Mammary epithelial cell (primary cell): ENCODE measurements at regions of chr1 and their contacts with region 1.

Region 1: GRCh38 chr1:202888531-202889360 is at the start of gene RABIF:
- DNase-seq: peak; percentile 92
- H3K4me3 ChIP-seq: peak within 1 kb of the TSS; percentile 87 to 93 (median 88)
- H3K27ac ChIP-seq: peak within 1 kb of the TSS; percentile 64
- H3K4me1 ChIP-seq: peaks cover 12% of the 10 kb centered on the region
- H3K27me3 ChIP-seq: no peaks in the 10 kb centered on the region
- CTCF ChIP-seq: peak in 1 of 2 donors; percentile 37
- total RNA-seq, gene RABIF: 5.2 to 8.5 TPM

Region 2: DNA sequence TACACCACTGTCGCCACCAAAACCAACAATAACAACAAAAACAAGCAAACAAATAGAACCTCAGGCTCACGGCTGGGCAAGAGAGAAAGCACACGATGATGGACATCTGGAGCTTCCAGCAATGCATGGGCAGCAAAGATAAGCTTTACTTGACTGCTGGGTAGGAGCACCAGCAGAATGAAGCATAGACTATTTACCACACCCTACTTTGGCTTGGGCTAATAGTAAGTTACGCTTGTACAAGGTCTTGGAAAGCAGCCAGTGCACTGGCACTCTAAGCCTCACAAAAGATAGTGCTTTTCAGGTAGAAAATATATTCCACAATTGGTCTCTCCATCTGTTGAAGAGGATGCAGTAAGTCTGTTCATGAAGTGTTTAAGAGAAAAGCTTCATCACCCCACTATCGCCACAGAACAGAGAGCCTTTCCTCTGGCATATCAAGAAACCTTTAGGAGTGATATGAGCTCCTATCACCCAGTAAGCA is 55.7 kb after region 1 on chr1:
- CTCF ChIA-PET with region 1: no interaction called
- dilution Hi-C with region 1: loop called (anchors 5 kb)
- in situ Hi-C with region 1: no loop called
- intact Hi-C with region 1: no loop called
- DNase-seq: no peak
- H3K4me3 ChIP-seq: no peak overlapping the region
- H3K27ac ChIP-seq: no peak overlapping the region
- H3K4me1 ChIP-seq: no peaks in the 10 kb centered on the region
- H3K27me3 ChIP-seq: no peaks in the 10 kb centered on the region
- CTCF ChIP-seq: no peak

Region 3: GRCh38 chr1:202968840-202969295 is 80.1 kb after region 1 on chr1:
- CTCF ChIA-PET with region 1: no interaction called
- dilution Hi-C with region 1: no loop called
- in situ Hi-C with region 1: no loop called
- intact Hi-C with region 1: loop called (anchors 1 kb)
- DNase-seq: peak; percentile 48
- H3K4me3 ChIP-seq: no peak overlapping the region
- H3K27ac ChIP-seq: no peak overlapping the region
- H3K4me1 ChIP-seq: peaks cover 31% of the 10 kb centered on the region
- H3K27me3 ChIP-seq: no peaks in the 10 kb centered on the region
- CTCF ChIP-seq: peak; percentile 83 to 90